GM13977 (cell line): ENCODE measurements at regions of chr17 and their contacts with region 1.

Region 1: GRCh38 chr17:72556944-72557826 is 436.4 kb downstream of the SOX9 start:
- DNase-seq: peak; percentile 84
- CTCF ChIP-seq: peak; percentile 80

Region 2: DNA sequence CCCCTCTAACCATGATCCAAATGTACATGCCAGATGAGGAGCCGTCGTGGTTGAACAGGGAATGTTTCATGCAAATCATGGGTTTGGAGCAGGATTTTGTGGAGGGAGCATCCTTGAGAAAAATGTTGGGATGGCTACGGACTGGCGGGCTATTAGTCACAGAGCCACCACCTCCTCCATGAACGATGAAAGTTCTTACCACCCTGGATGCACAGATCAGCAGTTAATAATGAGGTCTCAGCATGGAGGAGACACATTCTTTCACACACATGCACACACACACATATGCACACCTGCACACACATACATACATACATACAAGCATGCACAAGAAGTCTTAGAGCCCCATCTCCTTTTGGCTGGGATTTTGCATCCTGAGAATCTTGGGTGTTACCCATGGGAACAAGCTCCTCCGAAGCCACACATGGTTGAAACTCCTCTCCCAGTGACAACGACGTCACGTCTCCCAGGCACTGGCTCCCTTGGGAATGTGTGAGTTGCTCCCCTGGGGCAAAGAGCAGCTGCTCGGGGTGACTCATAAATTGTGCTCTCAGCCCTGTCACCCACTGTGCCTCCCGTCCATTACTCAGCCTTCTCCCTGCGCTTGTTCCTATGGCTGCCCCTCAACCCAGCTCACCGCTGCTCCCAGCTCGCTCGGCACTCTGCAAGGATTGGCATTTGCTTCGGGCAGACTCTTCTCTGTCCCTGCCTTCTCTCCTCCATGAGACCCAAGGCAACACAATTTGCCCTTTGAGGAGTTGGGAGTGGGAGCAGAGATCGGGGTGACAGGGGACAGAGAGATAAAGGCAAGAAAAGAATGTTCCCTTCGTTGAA is 91.8 kb before region 1 on chr17:
- in situ Hi-C with region 1: no loop called
- DNase-seq: peak; percentile 34
- CTCF ChIP-seq: no peak

Region 3: DNA sequence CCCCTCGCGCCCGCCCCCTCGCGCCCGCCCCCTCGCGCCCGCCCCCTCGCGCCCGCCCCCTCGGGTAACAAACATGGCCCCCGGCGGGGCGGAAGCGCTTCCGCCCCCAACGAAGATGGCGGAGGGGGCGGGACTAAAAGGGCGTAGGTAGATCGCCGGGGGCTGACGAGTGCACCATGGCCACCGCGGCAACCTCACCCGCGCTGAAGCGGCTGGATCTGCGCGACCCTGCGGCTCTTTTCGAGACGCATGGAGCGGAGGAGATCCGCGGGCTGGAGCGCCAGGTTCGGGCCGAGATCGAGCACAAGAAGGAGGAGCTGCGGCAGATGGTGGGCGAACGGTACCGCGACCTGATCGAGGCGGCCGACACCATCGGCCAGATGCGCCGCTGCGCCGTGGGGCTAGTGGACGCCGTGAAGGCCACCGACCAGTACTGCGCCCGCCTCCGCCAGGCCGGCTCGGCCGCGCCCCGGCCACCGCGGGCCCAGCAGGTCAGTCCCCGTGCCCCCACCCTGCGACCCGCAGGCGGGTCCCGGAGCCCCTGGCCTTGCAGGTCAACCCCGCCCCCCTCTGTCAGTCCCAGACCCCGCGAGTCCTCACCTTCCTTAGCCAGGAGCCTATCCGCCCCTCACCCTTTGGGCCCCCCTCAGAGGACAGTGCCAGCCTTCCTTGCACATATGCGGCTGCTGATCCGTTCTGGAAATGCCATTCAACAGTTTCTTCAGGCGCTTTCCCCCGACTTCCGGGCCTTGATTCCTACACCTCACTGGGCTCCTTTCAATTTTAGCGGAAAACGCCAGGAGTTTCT is 635.9 kb after region 1 on chr17 and contains the start of gene COG1:
- in situ Hi-C with region 1: loop called (anchors 25 kb)
- DNase-seq: peak; percentile 98
- CTCF ChIP-seq: no peak

Region 4: DNA sequence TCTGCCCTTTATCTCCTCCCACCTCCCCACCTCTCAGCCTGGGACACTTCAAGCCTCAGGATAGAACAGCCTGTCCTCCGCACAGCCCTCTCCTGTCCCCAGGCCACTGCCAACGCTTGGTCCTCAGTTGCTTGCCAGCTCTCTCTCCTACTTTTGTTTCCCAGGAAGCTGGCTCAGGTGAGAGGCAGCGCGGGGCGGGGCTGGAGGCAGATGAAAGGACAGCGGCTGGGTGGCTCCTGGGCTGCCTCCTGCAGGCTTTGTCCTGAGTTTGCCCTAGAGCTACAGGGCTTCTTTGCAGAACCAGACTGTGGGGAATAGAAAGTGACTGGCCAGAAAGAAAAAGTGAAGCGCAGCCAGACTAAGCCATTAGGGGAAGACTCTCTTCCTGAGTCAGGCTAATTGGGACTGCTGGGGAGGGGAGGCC is 802.8 kb after region 1 on chr17:
- in situ Hi-C with region 1: loop called (anchors 25 kb)
- DNase-seq: no peak
- CTCF ChIP-seq: no peak